OCI-LY7 (cell line): ENCODE measurements at regions of chr1 and their contacts with region 1.

Region 1: GRCh38 chr1:247131236-247131635 is 27.1 kb upstream of the ZNF669 start:
- DNase-seq: no peak
- H3K4me3 ChIP-seq: no peak overlapping the region
- H3K27ac ChIP-seq: no peak overlapping the region
- H3K4me1 ChIP-seq: peaks cover 5% of the 10 kb centered on the region
- CTCF ChIP-seq: no peak

Region 2: GRCh38 chr1:247172996-247173395 is 41.8 kb after region 1 on chr1:
- CTCF ChIA-PET with region 1: no interaction called
- POLR2A ChIA-PET with region 1: interaction called, 3 read pairs
- intact Hi-C with region 1: loop called (anchors 2 kb)
- DNase-seq: no peak
- H3K4me3 ChIP-seq: no peak overlapping the region
- H3K27ac ChIP-seq: no peak overlapping the region
- H3K4me1 ChIP-seq: peaks cover 5% of the 10 kb centered on the region
- CTCF ChIP-seq: no peak

Region 3: GRCh38 chr1:247304031-247304430 is 172.8 kb after region 1 on chr1:
- CTCF ChIA-PET with region 1: no interaction called
- POLR2A ChIA-PET with region 1: no interaction called
- intact Hi-C with region 1: no loop called
- DNase-seq: no peak
- H3K4me3 ChIP-seq: no peak overlapping the region
- H3K27ac ChIP-seq: no peak overlapping the region
- H3K4me1 ChIP-seq: no peaks in the 10 kb centered on the region
- CTCF ChIP-seq: no peak

Region 4: GRCh38 chr1:247322849-247323586 is 191.8 kb after region 1 on chr1:
- CTCF ChIA-PET with region 1: no interaction called
- POLR2A ChIA-PET with region 1: no interaction called
- intact Hi-C with region 1: no loop called
- DNase-seq: no peak
- H3K4me3 ChIP-seq: no peak overlapping the region
- H3K27ac ChIP-seq: no peak overlapping the region
- H3K4me1 ChIP-seq: peaks cover 13% of the 10 kb centered on the region
- CTCF ChIP-seq: no peak